MCF 10A (cell line): ENCODE measurements at regions of chr14 and their contacts with region 1.

Region 1: DNA sequence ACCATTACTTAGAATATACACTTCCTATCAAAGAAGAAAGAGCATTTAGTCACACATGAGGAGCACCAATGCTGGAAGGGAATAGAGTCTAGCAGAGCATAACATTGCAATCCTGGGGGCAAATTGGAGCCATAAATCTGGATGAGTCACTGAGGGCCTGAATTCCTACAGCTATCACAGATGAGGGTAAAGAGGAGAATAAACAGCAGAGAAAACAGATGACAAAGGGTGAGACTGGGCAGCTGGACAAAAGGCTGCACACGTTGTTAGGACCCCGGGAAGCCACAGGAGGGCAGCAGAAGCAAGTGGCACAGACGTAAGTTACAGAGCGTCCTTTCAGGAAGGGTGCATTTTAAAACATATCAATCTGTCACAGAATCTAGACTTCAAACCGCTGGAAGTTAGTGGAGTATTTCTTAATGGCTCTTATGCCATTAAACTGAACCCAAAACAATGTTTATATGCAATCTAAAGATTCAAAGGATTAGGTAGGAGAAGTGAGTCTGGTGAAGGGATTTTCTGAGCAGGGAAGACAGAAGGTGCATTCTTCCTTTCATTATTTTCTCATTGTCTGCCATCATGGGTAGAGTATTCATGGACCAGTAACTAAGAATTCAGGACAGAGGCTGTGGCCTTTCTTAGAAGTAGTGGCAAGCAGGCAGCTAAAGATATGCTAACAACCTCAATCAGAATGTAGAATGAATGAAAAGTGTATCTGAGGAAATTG is 159.8 kb upstream of the DAAM1 start:
- DNase-seq: peak; percentile 78
- H3K4me3 Mint-ChIP-seq: peak overlapping the region; percentile 35
- H3K27ac Mint-ChIP-seq: no peak overlapping the region
- H3K4me1 Mint-ChIP-seq: peaks cover 8% of the 10 kb centered on the region
- H3K27me3 Mint-ChIP-seq: peaks cover 41% of the 10 kb centered on the region
- CTCF ChIP-seq: peak; percentile 78

Region 2: GRCh38 chr14:58501214-58501816 is 527.3 kb before region 1 on chr14:
- CTCF ChIA-PET with region 1: interaction called, 7 read pairs
- POLR2A ChIA-PET with region 1: no interaction called
- intact Hi-C with region 1: loop called (anchors 1 kb)
- DNase-seq: peak; percentile 50
- H3K4me3 Mint-ChIP-seq: no peak overlapping the region
- H3K27ac Mint-ChIP-seq: no peak overlapping the region
- H3K4me1 Mint-ChIP-seq: no peaks in the 10 kb centered on the region
- H3K27me3 Mint-ChIP-seq: no peaks in the 10 kb centered on the region
- CTCF ChIP-seq: peak; percentile 58

Region 3: DNA sequence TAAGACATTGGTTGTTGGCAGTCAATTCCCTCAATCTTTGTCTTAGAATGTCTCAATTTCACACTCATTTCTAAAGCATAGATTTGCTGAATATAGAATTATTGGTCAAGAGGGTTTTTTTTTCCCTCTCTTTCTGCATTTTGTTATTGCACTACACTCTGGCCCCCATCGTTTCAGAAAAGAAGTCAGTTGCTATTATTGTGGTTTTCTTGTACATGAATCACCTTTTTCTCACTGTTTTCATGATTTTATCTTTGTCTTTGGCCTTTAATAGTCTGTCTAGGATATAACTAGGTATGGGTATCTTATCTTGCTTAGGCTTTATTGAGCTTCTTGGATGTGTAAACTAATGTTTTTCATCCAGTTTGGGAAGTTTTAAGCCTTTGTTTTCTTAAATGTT is 34.5 kb before region 1 on chr14:
- CTCF ChIA-PET with region 1: no interaction called
- POLR2A ChIA-PET with region 1: no interaction called
- intact Hi-C with region 1: no loop called
- DNase-seq: no peak
- H3K4me3 Mint-ChIP-seq: no peak overlapping the region
- H3K27ac Mint-ChIP-seq: no peak overlapping the region
- H3K4me1 Mint-ChIP-seq: no peaks in the 10 kb centered on the region
- H3K27me3 Mint-ChIP-seq: peaks cover 66% of the 10 kb centered on the region
- CTCF ChIP-seq: no peak

Region 4: GRCh38 chr14:59055439-59056045 is 26.9 kb after region 1 on chr14:
- CTCF ChIA-PET with region 1: interaction called, 5 read pairs
- POLR2A ChIA-PET with region 1: no interaction called
- intact Hi-C with region 1: loop called (anchors 2 kb)
- DNase-seq: peak; percentile 28
- H3K4me3 Mint-ChIP-seq: no peak overlapping the region
- H3K27ac Mint-ChIP-seq: no peak overlapping the region
- H3K4me1 Mint-ChIP-seq: no peaks in the 10 kb centered on the region
- H3K27me3 Mint-ChIP-seq: peaks cover 29% of the 10 kb centered on the region
- CTCF ChIP-seq: peak; percentile 46

Region 5: GRCh38 chr14:59120921-59121320 is 92.3 kb after region 1 on chr14:
- CTCF ChIA-PET with region 1: interaction called, 24 read pairs
- POLR2A ChIA-PET with region 1: no interaction called
- intact Hi-C with region 1: loop called (anchors 1 kb)
- DNase-seq: no peak
- H3K4me3 Mint-ChIP-seq: no peak overlapping the region
- H3K27ac Mint-ChIP-seq: no peak overlapping the region
- H3K4me1 Mint-ChIP-seq: peaks cover 4% of the 10 kb centered on the region
- H3K27me3 Mint-ChIP-seq: peaks cover 44% of the 10 kb centered on the region
- CTCF ChIP-seq: no peak

Region 6: GRCh38 chr14:59438195-59438647 is 409.6 kb after region 1 on chr14:
- CTCF ChIA-PET with region 1: no interaction called
- POLR2A ChIA-PET with region 1: no interaction called
- intact Hi-C with region 1: loop called (anchors 5 kb)
- DNase-seq: peak; percentile 76
- H3K4me3 Mint-ChIP-seq: no peak overlapping the region
- H3K27ac Mint-ChIP-seq: peak overlapping the region; percentile 57
- H3K4me1 Mint-ChIP-seq: peaks cover 15% of the 10 kb centered on the region
- H3K27me3 Mint-ChIP-seq: no peaks in the 10 kb centered on the region
- CTCF ChIP-seq: no peak